CD14-positive monocyte (primary cell): ENCODE measurements at regions of chr15 and their contacts with region 1.

Region 1: DNA sequence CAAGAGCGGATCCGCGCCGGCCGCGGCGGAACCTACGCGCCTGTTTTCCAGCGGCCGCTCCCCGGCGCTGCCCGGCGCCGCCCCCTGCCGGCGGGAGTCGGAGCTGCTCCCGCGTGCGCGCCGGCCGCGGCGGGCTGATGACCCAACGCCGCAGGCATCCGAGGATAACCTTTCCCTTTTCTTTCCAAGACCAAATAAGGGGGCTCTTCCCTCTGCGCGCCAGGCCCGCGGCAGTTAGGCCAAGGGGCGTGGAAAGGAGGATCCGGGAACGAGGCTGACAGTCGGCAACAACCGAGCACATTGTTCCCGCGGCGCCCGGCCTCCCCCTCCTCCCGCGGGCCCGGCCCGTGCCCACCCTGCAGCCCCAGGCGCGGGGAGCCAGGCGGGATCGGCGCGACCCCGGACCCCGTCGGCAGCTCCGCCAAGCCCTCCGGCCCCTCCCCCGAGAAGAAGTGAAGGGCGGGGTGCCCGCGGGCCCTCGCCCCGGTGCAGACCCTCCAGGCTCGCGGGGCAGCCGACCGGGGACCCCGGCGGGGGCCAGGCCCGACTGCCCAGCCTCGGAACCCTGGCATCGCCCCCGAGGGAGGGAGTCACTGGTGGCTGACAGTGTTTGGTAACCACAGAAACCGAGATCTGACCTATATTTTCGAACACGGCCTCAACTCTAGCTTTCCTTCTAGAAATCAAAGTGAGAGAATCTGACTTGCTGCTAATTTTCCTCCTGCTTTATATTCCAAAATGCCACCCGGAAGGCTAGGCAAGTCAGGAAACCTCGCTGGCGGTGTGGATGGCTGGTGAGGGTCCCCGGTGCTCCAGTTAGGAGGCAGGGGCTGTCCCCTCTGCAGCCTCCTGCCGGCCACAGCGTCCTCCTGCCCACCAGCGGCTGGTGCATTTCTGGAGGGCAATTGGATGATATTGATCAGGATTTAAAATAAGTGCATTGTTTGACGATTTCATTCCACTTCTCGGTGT is 45.6 kb upstream of the SYNM start:
- DNase-seq: peak; percentile 22 to 48 (median 40)
- H3K4me3 ChIP-seq: peak overlapping the region in 1 of 3 experiments; percentile 67
- H3K4me3 Mint-ChIP-seq: peak overlapping the region; percentile 67 to 82
- H3K27ac ChIP-seq: no peak overlapping the region
- H3K27ac Mint-ChIP-seq: no peak overlapping the region
- H3K4me1 ChIP-seq: peaks cover 15 to 19% of the 10 kb centered on the region in 2 donors
- H3K4me1 Mint-ChIP-seq: peaks cover 17% of the 10 kb centered on the region
- H3K27me3 ChIP-seq: peaks cover 20 to 56% of the 10 kb centered on the region in 2 donors
- H3K27me3 Mint-ChIP-seq: peaks cover 52 to 72% (median 60%) of the 10 kb centered on the region in 3 donors
- CTCF ChIP-seq: peak; percentile 77

Region 2: DNA sequence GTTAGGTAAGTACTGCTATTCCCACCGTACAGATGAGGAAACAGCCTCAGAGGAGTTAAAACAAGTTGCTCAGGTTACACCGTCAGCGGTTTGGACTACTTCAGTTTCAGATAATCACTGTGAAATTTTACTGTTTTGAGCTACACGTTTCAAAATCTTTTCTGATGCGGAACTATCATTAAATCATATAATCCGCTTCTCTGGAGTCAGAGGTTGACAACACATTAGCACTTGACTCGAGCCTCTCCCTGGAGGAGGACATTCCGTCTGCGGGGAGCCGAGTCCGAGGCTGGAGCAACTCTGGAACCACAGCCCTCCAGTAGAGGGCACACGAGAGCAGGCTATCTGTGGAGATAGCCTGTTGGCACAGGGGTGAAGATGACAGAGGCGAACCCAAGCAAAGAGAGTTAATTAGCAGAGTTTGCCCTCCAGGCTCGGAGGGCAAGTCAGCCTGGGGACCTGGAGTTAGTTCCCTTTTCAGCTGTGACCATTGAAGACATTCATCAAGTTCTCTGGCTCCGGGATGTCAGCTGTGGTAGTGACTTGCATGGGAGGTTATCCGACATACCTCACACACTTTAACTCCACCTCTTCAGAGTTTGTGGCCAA is 279.7 kb before region 1 on chr15:
- intact Hi-C with region 1: loop called in 1 of 2 experiments (anchors 5 kb)
- DNase-seq: peak; percentile 70 to 79 (median 75)
- H3K4me3 ChIP-seq: no peak overlapping the region
- H3K4me3 Mint-ChIP-seq: peak overlapping the region; percentile 17 to 78
- H3K27ac ChIP-seq: no peak overlapping the region
- H3K27ac Mint-ChIP-seq: peak overlapping the region in 4 of 7 donors; percentile 5 to 84 (median 58)
- H3K4me1 ChIP-seq: peaks cover 8 to 12% of the 10 kb centered on the region in 2 donors
- H3K4me1 Mint-ChIP-seq: peaks cover 20% of the 10 kb centered on the region
- H3K27me3 ChIP-seq: no peaks in the 10 kb centered on the region
- H3K27me3 Mint-ChIP-seq: peaks cover 0 to 3% (median 2%) of the 10 kb centered on the region in 3 donors
- CTCF ChIP-seq: peak; percentile 84

Region 3: GRCh38 chr15:98856218-98856907 is 202.9 kb before region 1 on chr15:
- intact Hi-C with region 1: no loop called
- DNase-seq: no peak
- H3K4me3 ChIP-seq: no peak overlapping the region
- H3K4me3 Mint-ChIP-seq: no peak overlapping the region
- H3K27ac ChIP-seq: no peak overlapping the region
- H3K27ac Mint-ChIP-seq: no peak overlapping the region
- H3K4me1 ChIP-seq: peaks cover 40 to 60% of the 10 kb centered on the region in 2 donors
- H3K4me1 Mint-ChIP-seq: peaks cover 57% of the 10 kb centered on the region
- H3K27me3 ChIP-seq: no peaks in the 10 kb centered on the region
- H3K27me3 Mint-ChIP-seq: no peaks in the 10 kb centered on the region
- CTCF ChIP-seq: no peak

Region 4: GRCh38 chr15:99486371-99487336 is 427.4 kb after region 1 on chr15:
- intact Hi-C with region 1: no loop called
- DNase-seq: peak in 2 of 3 donors; percentile 64 to 72
- H3K4me3 ChIP-seq: peak overlapping the region; percentile 6 to 52 (median 10)
- H3K4me3 Mint-ChIP-seq: peak overlapping the region; percentile 77 to 89
- H3K27ac ChIP-seq: peak overlapping the region in 1 of 2 donors; percentile 68
- H3K27ac Mint-ChIP-seq: peak overlapping the region in 6 of 7 donors; percentile 11 to 75 (median 64)
- H3K4me1 ChIP-seq: peaks cover 31 to 41% of the 10 kb centered on the region in 2 donors
- H3K4me1 Mint-ChIP-seq: peaks cover 45% of the 10 kb centered on the region
- H3K27me3 ChIP-seq: no peaks in the 10 kb centered on the region
- H3K27me3 Mint-ChIP-seq: peaks cover 2 to 15% (median 14%) of the 10 kb centered on the region in 3 donors
- CTCF ChIP-seq: no peak